ENCODE measurements at regions of chr19 and their contacts with region 1.

Region 1: GRCh38 chr19:41308392-41309179 is 1.4 kb upstream of the CCDC97 start:
- DNase-seq: peak; percentile 93 to 97
- ATAC-seq: peak; percentile 69 to 79 (median 74)
- H3K4me3 ChIP-seq: peak overlapping the region; percentile 83
- H3K27ac ChIP-seq: peak overlapping the region; percentile 93
- H3K4me1 ChIP-seq: peaks cover 34% of the 10 kb centered on the region
- H3K27me3 ChIP-seq: no peaks in the 10 kb centered on the region
- CTCF ChIP-seq: peak; percentile 99

Region 2: GRCh38 chr19:41076286-41076685 is 232.3 kb before region 1 on chr19:
- intact Hi-C with region 1: no loop called
- DNase-seq: no peak
- ATAC-seq: no peak
- H3K4me3 ChIP-seq: no peak overlapping the region
- H3K27ac ChIP-seq: no peak overlapping the region
- H3K4me1 ChIP-seq: no peaks in the 10 kb centered on the region
- H3K27me3 ChIP-seq: no peaks in the 10 kb centered on the region
- CTCF ChIP-seq: no peak

Region 3: GRCh38 chr19:41123716-41124294 is 184.8 kb before region 1 on chr19:
- intact Hi-C with region 1: loop called in 1 of 2 experiments (anchors 2 kb)
- DNase-seq: no peak
- ATAC-seq: no peak
- H3K4me3 ChIP-seq: no peak overlapping the region
- H3K27ac ChIP-seq: no peak overlapping the region
- H3K4me1 ChIP-seq: no peaks in the 10 kb centered on the region
- H3K27me3 ChIP-seq: no peaks in the 10 kb centered on the region
- CTCF ChIP-seq: no peak

Region 4: GRCh38 chr19:41206926-41207750 is 101.4 kb before region 1 on chr19:
- intact Hi-C with region 1: loop called (anchors 2 to 5 kb)
- DNase-seq: peak; percentile 83 to 94
- ATAC-seq: peak in 3 of 4 donors; percentile 53 to 79 (median 60)
- H3K4me3 ChIP-seq: peak overlapping the region; percentile 11
- H3K27ac ChIP-seq: peak overlapping the region; percentile 23
- H3K4me1 ChIP-seq: no peaks in the 10 kb centered on the region
- H3K27me3 ChIP-seq: peaks cover 0 to 4% (median 0%) of the 10 kb centered on the region in 3 donors
- CTCF ChIP-seq: no peak

Region 5: GRCh38 chr19:41263850-41264580 is 44.6 kb before region 1 on chr19 and contains the start of gene HNRNPUL1:
- intact Hi-C with region 1: loop called (anchors 2 to 5 kb)
- DNase-seq: peak; percentile 97 to 99
- ATAC-seq: peak; percentile 83 to 88 (median 84)
- H3K4me3 ChIP-seq: peak within 1 kb of the TSS; percentile 99
- H3K27ac ChIP-seq: peak within 1 kb of the TSS; percentile 98
- H3K4me1 ChIP-seq: peaks cover 23% of the 10 kb centered on the region
- H3K27me3 ChIP-seq: no peaks in the 10 kb centered on the region
- CTCF ChIP-seq: peak; percentile 31
- total RNA-seq, gene HNRNPUL1: 82.2 to 129 (median 105) TPM

Region 6: GRCh38 chr19:41341669-41342490 is 33.3 kb after region 1 on chr19:
- intact Hi-C with region 1: no loop called
- DNase-seq: no peak
- ATAC-seq: no peak
- H3K4me3 ChIP-seq: no peak overlapping the region
- H3K27ac ChIP-seq: no peak overlapping the region
- H3K4me1 ChIP-seq: no peaks in the 10 kb centered on the region
- H3K27me3 ChIP-seq: no peaks in the 10 kb centered on the region
- CTCF ChIP-seq: no peak

Region 7: GRCh38 chr19:41353466-41354342 is 45.1 kb after region 1 on chr19 and contains the start of gene TGFB1:
- intact Hi-C with region 1: no loop called
- DNase-seq: peak; percentile 90 to 91
- ATAC-seq: peak; percentile 67 to 77 (median 70)
- H3K4me3 ChIP-seq: peak within 1 kb of the TSS; percentile 69
- H3K27ac ChIP-seq: peak within 1 kb of the TSS; percentile 59
- H3K4me1 ChIP-seq: peaks cover 3% of the 10 kb centered on the region
- H3K27me3 ChIP-seq: peaks cover 0 to 38% (median 0%) of the 10 kb centered on the region in 3 donors
- CTCF ChIP-seq: peak; percentile 75
- total RNA-seq, gene TGFB1: 8.2 to 10.8 (median 10.1) TPM

Region 8: DNA sequence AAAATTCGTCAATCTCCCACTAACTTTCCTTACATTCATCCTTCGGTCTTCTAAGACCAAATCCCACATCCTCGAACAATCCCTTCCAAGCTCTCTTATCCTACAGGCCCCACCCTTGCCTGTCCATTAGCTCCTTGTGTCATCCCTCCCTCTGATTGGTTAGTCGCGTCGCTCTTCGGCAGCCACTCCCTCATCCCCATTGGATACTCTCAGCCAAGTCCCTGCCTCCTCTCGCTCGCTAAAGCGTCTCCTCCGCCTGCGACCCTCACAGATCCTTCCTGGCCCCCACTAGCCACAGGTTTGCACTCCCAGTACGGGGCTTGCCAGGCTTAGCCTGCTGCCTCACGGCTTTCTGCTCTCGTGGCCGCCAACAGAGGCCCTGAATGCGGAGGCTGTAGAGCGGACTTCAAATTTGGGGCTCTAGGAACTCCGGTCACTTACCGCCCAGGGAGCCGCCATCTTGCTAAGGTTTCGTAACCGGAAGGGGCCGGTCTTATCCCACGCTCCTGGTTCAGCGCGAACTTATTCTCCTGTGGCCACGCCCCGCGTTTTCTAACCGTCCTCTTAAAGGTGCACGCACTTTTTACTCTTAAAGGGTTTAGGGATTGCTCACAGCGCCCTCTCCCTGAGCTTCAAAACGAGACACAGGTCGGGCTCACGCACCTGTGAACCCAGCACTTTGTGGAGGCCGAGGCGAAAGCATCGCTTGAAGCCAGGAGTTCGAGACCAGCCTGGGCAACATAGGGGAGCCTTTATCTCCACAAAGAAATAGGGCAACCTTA is 131.0 kb after region 1 on chr19 and contains the start of gene DMAC2:
- intact Hi-C with region 1: loop called in 1 of 2 experiments (anchors 5 kb)
- DNase-seq: peak; percentile 98
- ATAC-seq: peak; percentile 97 to 98 (median 98)
- H3K4me3 ChIP-seq: peak within 1 kb of the TSS; percentile 73
- H3K27ac ChIP-seq: peak within 1 kb of the TSS; percentile 91
- H3K4me1 ChIP-seq: peaks cover 9% of the 10 kb centered on the region
- H3K27me3 ChIP-seq: peaks cover 0 to 4% (median 0%) of the 10 kb centered on the region in 3 donors
- CTCF ChIP-seq: peak; percentile 43
- total RNA-seq, gene DMAC2: 37.6 to 71.4 (median 59.5) TPM

Measured in psoas muscle (tissue), 8 donors.